K562 (cell line): ENCODE measurements at regions of chr12 and their contacts with region 1.

Region 1: GRCh38 chr12:123354600-123354999 is 10.0 kb downstream of the SBNO1 start:
- DNase-seq: no peak
- ATAC-seq: no peak; the same call in 1 of the 3 replicates
- H3K4me3 ChIP-seq: no peak overlapping the region
- H3K27ac ChIP-seq: no peak overlapping the region
- H3K4me1 ChIP-seq: peaks cover 5 to 12% of the 10 kb centered on the region in 2 experiments; a peak in 4 of 5 replicates
- H3K27me3 ChIP-seq: no peaks in the 10 kb centered on the region
- CTCF ChIP-seq: no peak
- EP300 ChIP-seq: no peak
- POLR2A ChIP-seq: no peak
- RAD21 ChIP-seq: no peak

Region 2: DNA sequence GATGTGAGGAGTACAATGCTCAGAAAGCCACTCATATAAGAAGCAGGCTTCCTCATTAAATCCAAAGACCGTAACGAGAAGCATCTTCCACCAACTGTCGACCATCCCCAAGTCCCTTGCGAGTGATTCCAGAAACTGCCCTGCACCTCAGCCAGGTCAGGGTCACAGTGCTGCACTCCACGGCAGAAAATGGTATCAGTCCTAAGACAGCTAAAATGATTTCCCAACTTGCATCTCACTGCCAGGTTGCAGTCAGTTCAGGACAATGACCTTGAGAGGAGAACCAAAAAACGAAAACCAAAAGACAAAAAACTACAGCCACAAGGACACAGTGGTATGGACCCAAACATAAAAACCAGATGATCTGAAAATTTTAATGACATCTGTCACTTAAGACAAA is 10.5 kb before region 1 on chr12:
- CTCF ChIA-PET with region 1: no interaction called
- POLR2A ChIA-PET with region 1: interaction called, 10 read pairs
- in situ Hi-C with region 1: no loop called
- intact Hi-C with region 1: no loop called
- DNase-seq: no peak
- ATAC-seq: no peak
- H3K4me3 ChIP-seq: no peak overlapping the region
- H3K27ac ChIP-seq: no peak overlapping the region
- H3K4me1 ChIP-seq: no peaks in the 10 kb centered on the region
- H3K27me3 ChIP-seq: no peaks in the 10 kb centered on the region
- CTCF ChIP-seq: no peak
- EP300 ChIP-seq: no peak
- POLR2A ChIP-seq: no peak
- RAD21 ChIP-seq: no peak